ENCODE measurements at regions of chr7 and their contacts with region 1.

Region 1: DNA sequence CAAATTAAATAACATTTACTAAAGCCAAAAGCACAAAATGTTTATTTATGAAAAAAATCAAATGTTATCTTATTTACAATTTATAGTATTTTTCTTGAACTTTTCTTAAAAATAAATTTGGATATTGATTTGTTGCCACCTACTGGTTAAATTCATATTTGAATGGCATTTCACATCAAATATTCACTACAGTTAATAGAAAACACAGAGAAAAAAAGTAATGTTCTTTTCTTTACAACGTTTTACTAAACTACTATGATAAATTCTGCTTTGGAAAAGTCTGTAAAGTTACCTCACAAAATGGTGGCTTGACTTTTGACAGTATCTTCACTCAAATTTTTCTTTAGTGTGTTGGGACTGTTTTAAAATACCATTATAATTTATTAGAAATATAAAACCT is 52.7 kb downstream of the SRPK2 start:
- DNase-seq: no peak
- ATAC-seq: no peak
- H3K4me3 ChIP-seq: no peak overlapping the region
- H3K27ac ChIP-seq: no peak overlapping the region
- H3K4me1 ChIP-seq: peaks cover 22% of the 10 kb centered on the region
- H3K27me3 ChIP-seq: no peaks in the 10 kb centered on the region
- CTCF ChIP-seq: peak; percentile 50

Region 2: GRCh38 chr7:104538152-104538551 is 797.9 kb before region 1 on chr7:
- intact Hi-C with region 1: no loop called
- DNase-seq: no peak
- ATAC-seq: no peak
- H3K4me3 ChIP-seq: no peak overlapping the region
- H3K27ac ChIP-seq: no peak overlapping the region
- H3K4me1 ChIP-seq: no peaks in the 10 kb centered on the region
- H3K27me3 ChIP-seq: no peaks in the 10 kb centered on the region
- CTCF ChIP-seq: no peak

Region 3: DNA sequence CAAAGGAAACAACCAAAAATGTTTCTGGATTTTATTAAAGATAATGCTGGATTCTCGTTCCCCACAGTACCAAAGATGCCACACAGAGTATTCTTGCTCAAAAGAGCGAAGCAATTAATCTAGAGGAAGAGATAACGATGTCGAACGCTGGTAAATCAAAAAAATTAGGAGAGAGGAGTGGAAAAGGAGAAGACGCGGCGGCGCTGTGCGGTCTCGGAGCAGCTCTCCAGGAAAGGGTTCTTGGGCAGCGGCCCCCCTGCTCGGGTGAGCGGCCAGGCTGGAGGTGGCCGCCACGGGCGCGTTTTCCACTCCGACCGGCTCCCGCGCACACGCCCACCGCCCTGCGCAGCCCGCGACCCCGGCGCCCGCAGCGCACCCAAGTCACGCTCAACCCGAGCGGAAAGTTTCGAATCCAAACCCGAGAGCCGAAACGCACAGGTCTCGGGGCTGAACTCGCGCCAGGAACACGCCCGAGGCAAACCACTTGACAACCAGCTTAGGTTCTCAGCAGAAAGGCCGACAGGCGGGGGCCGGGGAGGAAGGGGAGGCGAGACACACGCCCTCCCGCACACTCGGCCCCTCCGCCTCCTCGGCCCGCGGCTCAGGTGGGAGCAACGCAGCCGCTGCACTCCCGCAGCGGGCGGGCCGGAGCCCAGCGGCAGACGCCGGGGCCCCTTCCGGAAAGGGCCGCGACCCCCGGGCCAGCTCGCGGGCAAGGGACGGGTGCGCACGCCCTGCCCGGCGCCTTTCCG is 51.8 kb after region 1 on chr7:
- intact Hi-C with region 1: loop called in 1 of 2 experiments (anchors 10 kb)
- DNase-seq: peak; percentile 68 to 81
- ATAC-seq: peak; percentile 55 to 77 (median 62)
- H3K4me3 ChIP-seq: peak overlapping the region; percentile 97
- H3K27ac ChIP-seq: peak overlapping the region; percentile 76
- H3K4me1 ChIP-seq: peaks cover 11% of the 10 kb centered on the region
- H3K27me3 ChIP-seq: no peaks in the 10 kb centered on the region
- CTCF ChIP-seq: no peak

Measured in psoas muscle (tissue), 8 donors.